MCF 10A (cell line): ENCODE measurements at regions of chr14 and their contacts with region 1.

Region 1: DNA sequence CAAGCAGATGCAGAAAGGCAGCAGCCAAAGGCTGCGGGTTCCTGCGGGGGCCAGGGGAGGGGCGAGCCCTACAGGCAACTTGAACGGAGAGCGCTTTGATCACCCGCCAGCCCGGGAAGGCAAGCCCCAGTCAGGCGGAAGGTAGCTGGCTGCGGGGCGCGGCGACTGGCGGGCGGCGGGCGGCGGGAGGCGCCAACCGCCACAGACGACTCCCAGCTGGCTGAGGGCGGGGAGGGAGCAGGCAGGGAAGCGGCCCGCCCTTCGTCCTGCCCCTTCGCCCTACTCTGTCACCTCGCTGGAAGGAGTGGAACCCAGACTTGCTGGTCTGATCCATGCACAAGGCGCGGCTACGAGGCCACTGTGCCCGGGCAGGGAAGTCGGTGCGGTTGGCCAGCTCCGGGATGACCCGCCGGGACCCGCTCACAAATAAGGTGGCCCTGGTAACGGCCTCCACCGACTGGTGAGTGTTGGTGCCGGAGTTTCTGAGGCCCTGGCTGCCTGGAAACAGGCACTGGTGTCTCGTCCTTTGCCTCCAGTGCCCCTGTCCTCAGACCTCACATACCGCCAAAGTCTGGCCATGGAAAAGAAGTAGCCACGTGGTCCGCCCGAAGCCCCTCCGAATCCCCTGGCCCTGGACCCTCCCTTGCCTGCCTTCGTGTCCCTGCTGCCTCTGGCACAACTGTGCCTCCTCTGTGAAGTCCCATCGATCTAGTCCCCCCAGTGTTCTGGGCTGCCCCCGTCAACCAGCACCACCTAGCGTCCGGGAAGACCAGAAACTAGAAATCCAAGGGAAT is 15.4 kb upstream of the CARMIL3 start:
- DNase-seq: peak; percentile 69
- H3K4me3 Mint-ChIP-seq: peak overlapping the region; percentile 76
- H3K27ac Mint-ChIP-seq: peak overlapping the region; percentile 54
- H3K4me1 Mint-ChIP-seq: peaks cover 11% of the 10 kb centered on the region
- H3K27me3 Mint-ChIP-seq: no peaks in the 10 kb centered on the region
- CTCF ChIP-seq: peak; percentile 88

Region 2: DNA sequence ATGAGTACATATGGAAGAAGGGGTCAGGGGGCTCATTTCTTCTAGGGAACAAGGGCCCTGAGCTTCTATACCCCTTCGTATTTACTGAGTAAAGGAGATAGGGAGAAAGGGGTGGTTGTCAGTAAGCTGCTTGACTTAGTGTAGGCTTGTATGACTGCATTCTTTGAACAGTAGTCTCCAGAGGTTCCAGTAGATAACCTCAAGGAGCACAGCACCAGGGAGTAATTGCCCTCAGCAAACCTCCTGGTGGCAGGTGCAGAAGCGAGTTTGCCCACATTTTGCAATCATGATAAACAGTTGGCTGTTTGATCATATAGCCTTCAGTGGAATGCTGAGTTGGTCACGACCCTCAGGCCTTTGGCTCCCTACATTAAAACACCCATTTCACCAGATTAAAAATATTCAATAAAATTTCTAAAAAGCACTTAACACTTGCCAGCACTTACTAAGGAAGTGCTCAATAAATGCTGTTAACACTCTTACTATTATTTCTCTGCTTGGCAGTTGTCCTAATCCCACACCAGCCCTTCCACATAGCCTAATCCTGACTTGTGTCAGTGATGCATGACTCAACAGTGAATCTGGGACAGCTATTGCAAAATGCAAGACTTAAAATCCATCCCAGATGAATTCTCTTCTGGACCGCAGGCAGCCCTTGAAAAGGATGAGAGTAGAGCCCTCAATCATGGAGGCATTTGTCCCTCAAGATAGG is 51.3 kb before region 1 on chr14:
- CTCF ChIA-PET with region 1: no interaction called
- POLR2A ChIA-PET with region 1: interaction called, 5 read pairs
- intact Hi-C with region 1: loop called (anchors 5 kb)
- DNase-seq: peak; percentile 87
- H3K4me3 Mint-ChIP-seq: no peak overlapping the region
- H3K27ac Mint-ChIP-seq: no peak overlapping the region
- H3K4me1 Mint-ChIP-seq: peaks cover 18% of the 10 kb centered on the region
- H3K27me3 Mint-ChIP-seq: no peaks in the 10 kb centered on the region
- CTCF ChIP-seq: no peak

Region 3: GRCh38 chr14:24013654-24014514 is 22.5 kb before region 1 on chr14:
- CTCF ChIA-PET with region 1: interaction called, 4 read pairs
- POLR2A ChIA-PET with region 1: no interaction called
- intact Hi-C with region 1: loop called (anchors 1 kb)
- DNase-seq: peak; percentile 83
- H3K4me3 Mint-ChIP-seq: no peak overlapping the region
- H3K27ac Mint-ChIP-seq: no peak overlapping the region
- H3K4me1 Mint-ChIP-seq: no peaks in the 10 kb centered on the region
- H3K27me3 Mint-ChIP-seq: peaks cover 20% of the 10 kb centered on the region
- CTCF ChIP-seq: peak; percentile 80